Activated T-helper 2 cell treated with anti-CD3 and anti-CD28 coated beads, Interferon-gamma antibody, Interleukin-2, Interleukin-4, amounts not matched to agents 10 μg/mL and 5 μg/mL and 100 μg/mL, durations not matched to agents 14 hours and 24 hours and 36 hours (primary cell): ENCODE measurements at regions of chr22 and their contacts with region 1.

Region 1: GRCh38 chr22:29837780-29838598 is at the start of gene ASCC2:
- DNase-seq: peak; percentile 99
- H3K4me3 Mint-ChIP-seq: peak within 1 kb of the TSS; percentile 91
- H3K27ac Mint-ChIP-seq: peak within 1 kb of the TSS; percentile 84
- H3K4me1 Mint-ChIP-seq: peaks cover 26% of the 10 kb centered on the region
- H3K27me3 Mint-ChIP-seq: no peaks in the 10 kb centered on the region
- total RNA-seq, gene ASCC2: 69.8 and 74.9 TPM in 2 replicates

Region 2: DNA sequence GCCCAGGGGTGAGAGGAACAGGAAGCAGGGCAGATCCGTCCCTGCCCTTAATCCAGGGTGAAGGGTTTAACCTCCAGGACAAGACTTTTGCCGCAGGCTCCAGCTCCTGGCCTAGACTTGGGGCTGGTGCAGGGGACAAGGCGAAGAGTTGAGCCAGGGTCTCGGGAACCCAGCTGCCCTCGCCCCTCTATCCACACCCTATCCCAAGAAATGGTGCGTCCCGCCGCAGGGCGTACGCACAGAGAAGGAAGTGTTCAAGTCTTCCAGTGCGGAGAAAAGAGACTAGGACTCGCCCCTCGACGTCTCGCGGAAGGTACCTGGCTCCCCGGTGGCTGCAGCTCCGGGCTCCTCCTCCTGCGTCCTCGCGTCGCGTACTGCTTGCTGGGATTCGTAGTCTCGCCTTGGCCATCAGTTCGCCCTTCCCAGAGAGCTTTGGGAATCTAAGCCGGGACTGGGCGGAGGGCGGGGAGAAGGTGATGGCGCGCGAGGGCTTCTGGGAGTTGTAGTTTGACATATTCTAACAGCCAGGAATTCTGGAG is 71.3 kb before region 1 on chr22 and contains the start of gene ZMAT5:
- intact Hi-C with region 1: loop called (anchors 1 kb)
- DNase-seq: peak; percentile 91
- H3K4me3 Mint-ChIP-seq: peak within 1 kb of the TSS; percentile 97
- H3K27ac Mint-ChIP-seq: peak within 1 kb of the TSS; percentile 91
- H3K4me1 Mint-ChIP-seq: peaks cover 21% of the 10 kb centered on the region
- H3K27me3 Mint-ChIP-seq: no peaks in the 10 kb centered on the region
- total RNA-seq, gene ZMAT5: 26.0 and 26.9 TPM in 2 replicates

Region 3: DNA sequence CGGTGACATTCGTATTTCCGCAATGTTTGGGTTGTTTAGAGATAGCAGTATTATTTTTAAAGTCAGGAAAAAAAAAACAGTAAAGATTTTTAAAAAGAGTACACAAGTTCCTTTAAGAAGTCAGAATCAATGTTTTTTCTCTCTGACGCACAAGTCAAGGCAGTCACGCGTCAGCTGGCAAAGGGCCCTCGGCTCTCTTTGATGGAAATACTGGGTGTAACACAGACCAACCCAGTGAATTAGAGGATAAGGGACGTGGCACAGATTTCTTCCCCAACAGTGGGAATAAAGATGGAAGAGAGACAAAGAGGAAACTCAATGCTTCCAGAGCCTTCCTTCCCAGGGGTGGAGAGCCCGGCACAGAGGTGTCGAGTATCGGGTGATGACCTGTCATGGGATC is 13.3 kb before region 1 on chr22:
- intact Hi-C with region 1: no loop called
- DNase-seq: no peak
- H3K4me3 Mint-ChIP-seq: no peak overlapping the region
- H3K27ac Mint-ChIP-seq: no peak overlapping the region
- H3K4me1 Mint-ChIP-seq: peaks cover 16% of the 10 kb centered on the region
- H3K27me3 Mint-ChIP-seq: no peaks in the 10 kb centered on the region

Region 4: GRCh38 chr22:29883045-29883774 is 45.2 kb after region 1 on chr22 and contains the start of gene MTMR3:
- intact Hi-C with region 1: loop called (anchors 2 kb)
- DNase-seq: peak; percentile 92
- H3K4me3 Mint-ChIP-seq: peak within 1 kb of the TSS; percentile 90
- H3K27ac Mint-ChIP-seq: peak within 1 kb of the TSS; percentile 81
- H3K4me1 Mint-ChIP-seq: peaks cover 10% of the 10 kb centered on the region
- H3K27me3 Mint-ChIP-seq: peaks cover 2% of the 10 kb centered on the region
- total RNA-seq, gene MTMR3: 22.1 and 24.7 TPM in 2 replicates